Activated CD8-positive, alpha-beta T cell treated with anti-CD3 and anti-CD28 coated beads, Interleukin-2, amount 10 ng/mL, durations not matched to agents 7 days and 5 days (primary cell): ENCODE measurements at regions of chr4 and their contacts with region 1.

Region 1: GRCh38 chr4:105471566-105472176 is 2.2 kb downstream of the PPA2 start:
- DNase-seq: peak; percentile 85
- ATAC-seq: peak; percentile 34
- H3K4me3 Mint-ChIP-seq: peak overlapping the region; percentile 96
- H3K27ac Mint-ChIP-seq: peak overlapping the region; percentile 74
- H3K4me1 Mint-ChIP-seq: peaks cover 25% of the 10 kb centered on the region
- H3K27me3 Mint-ChIP-seq: peaks cover under 1% of the 10 kb centered on the region

Region 2: DNA sequence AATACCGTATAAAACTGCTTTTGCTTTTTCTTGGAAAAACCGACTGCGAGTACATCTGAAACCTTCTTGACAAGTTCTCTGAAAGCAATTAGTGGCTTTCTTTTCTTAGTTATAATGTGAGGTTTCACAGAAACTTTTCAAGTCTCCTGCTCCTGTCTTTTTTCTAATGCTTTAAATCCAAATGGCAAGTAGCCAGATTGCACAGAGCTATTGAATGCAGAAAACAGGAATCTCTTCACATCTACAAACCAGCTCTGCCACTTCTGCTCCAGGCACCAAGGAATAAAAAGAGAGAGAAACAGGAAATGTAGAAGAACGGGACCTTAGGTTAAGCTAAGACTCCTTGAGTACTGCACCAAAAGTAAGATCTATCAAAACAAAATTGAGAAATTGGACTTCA is 592.3 kb before region 1 on chr4:
- CTCF ChIA-PET with region 1: interaction called, 12 read pairs
- POLR2A ChIA-PET with region 1: no interaction called
- DNase-seq: no peak
- ATAC-seq: peak; percentile 70
- H3K4me3 Mint-ChIP-seq: peak overlapping the region; percentile 65
- H3K27ac Mint-ChIP-seq: peak overlapping the region; percentile 94
- H3K4me1 Mint-ChIP-seq: peaks cover 43% of the 10 kb centered on the region
- H3K27me3 Mint-ChIP-seq: no peaks in the 10 kb centered on the region

Region 3: GRCh38 chr4:104930298-104930697 is 541.4 kb before region 1 on chr4:
- CTCF ChIA-PET with region 1: interaction called, 11 read pairs
- POLR2A ChIA-PET with region 1: no interaction called
- DNase-seq: no peak
- ATAC-seq: no peak
- H3K4me3 Mint-ChIP-seq: no peak overlapping the region
- H3K27ac Mint-ChIP-seq: peak overlapping the region; percentile 88
- H3K4me1 Mint-ChIP-seq: peaks cover 54% of the 10 kb centered on the region
- H3K27me3 Mint-ChIP-seq: no peaks in the 10 kb centered on the region

Region 4: DNA sequence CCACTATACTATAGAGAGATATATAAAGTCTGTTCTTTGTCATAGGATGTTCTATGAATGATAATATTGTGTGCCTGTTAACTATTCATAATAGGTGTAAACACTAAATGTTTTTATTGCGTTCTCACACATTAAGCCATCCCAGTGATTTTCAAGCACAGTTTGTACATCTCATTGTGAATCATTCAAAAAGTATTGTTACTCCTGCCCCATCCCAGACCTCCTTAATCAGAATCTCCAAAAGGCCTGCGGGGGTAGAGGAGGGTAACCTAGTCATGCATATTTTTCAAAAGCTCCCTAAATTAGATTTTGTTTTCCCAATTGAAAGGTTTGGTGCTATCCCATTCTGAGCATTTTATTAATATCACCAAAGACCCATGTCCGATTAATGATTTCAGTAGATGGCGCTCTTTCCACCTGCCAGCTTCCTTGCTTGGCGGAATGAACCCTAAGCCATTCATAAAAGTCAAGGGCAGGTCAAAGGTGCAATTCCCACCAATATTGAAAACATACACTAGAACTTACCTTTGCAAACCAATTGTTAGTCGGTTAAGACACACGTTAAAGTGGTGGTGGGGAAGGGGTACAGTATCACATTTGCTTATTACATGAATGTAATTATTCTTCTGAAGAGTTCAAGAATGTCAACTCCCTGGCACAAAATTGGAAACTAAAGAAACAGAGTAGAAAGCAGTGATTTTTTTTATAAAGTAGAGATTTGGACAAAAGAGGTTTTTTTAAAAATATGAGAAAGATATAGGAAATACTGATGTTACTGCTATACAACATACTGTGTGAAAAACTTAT is 330.8 kb before region 1 on chr4:
- CTCF ChIA-PET with region 1: interaction called, 19 read pairs
- POLR2A ChIA-PET with region 1: interaction called, 7 read pairs
- DNase-seq: peak; percentile 52
- ATAC-seq: peak; percentile 37
- H3K4me3 Mint-ChIP-seq: no peak overlapping the region
- H3K27ac Mint-ChIP-seq: no peak overlapping the region
- H3K4me1 Mint-ChIP-seq: peaks cover 15% of the 10 kb centered on the region
- H3K27me3 Mint-ChIP-seq: peaks cover 4% of the 10 kb centered on the region

Region 5: DNA sequence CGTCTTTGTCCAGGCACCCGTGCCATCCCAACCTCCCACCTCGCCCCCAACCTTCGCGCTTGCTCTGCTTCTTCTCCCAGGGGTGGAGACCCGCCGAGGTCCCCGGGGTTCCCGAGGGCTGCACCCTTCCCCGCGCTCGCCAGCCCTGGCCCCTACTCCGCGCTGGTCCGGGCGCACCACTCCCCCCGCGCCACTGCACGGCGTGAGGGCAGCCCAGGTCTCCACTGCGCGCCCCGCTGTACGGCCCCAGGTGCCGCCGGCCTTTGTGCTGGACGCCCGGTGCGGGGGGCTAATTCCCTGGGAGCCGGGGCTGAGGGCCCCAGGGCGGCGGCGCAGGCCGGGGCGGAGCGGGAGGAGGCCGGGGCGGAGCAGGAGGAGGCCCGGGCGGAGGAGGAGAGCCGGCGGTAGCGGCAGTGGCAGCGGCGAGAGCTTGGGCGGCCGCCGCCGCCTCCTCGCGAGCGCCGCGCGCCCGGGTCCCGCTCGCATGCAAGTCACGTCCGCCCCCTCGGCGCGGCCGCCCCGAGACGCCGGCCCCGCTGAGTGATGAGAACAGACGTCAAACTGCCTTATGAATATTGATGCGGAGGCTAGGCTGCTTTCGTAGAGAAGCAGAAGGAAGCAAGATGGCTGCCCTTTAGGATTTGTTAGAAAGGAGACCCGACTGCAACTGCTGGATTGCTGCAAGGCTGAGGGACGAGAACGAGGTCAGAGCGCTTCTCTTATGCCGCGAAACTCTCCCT is 325.2 kb before region 1 on chr4 and contains the start of gene TET2:
- CTCF ChIA-PET with region 1: interaction called, 19 read pairs
- POLR2A ChIA-PET with region 1: interaction called, 7 read pairs
- DNase-seq: peak; percentile 89
- ATAC-seq: peak; percentile 93
- H3K4me3 Mint-ChIP-seq: peak within 1 kb of the TSS; percentile 99
- H3K27ac Mint-ChIP-seq: peak within 1 kb of the TSS; percentile 100
- H3K4me1 Mint-ChIP-seq: peaks cover 33% of the 10 kb centered on the region
- H3K27me3 Mint-ChIP-seq: no peaks in the 10 kb centered on the region
- total RNA-seq, gene TET2: 28.4 to 29.3 TPM

Region 6: DNA sequence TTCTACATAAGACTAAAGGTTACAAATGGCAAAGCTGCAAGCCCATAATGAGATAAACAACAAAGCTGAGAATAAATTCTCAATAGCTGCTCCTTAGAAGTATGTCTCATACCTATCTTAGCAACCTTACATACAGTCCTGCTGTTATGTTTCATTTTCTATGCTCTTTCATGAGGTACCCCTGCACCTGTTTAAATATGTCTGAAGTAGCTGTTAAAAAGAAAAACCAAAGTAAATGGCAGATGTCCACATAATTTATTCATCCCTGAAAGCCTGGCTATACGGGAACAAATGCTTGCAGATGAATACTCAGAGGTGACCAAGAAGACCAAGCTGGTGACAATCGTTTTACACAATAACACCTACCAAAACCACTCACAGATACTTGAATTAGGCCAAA is 20.3 kb before region 1 on chr4:
- CTCF ChIA-PET with region 1: interaction called, 11 read pairs
- POLR2A ChIA-PET with region 1: no interaction called
- DNase-seq: no peak
- ATAC-seq: no peak
- H3K4me3 Mint-ChIP-seq: no peak overlapping the region
- H3K27ac Mint-ChIP-seq: no peak overlapping the region
- H3K4me1 Mint-ChIP-seq: peaks cover 6% of the 10 kb centered on the region
- H3K27me3 Mint-ChIP-seq: no peaks in the 10 kb centered on the region